ENCODE measurements at regions of chr2 and their contacts with region 1.

Region 1: GRCh38 chr2:158473719-158474392 is 17.1 kb downstream of the PKP4 start:
- DNase-seq: no peak
- ATAC-seq: peak; percentile 70
- H3K4me3 Mint-ChIP-seq: no peak overlapping the region
- H3K27ac Mint-ChIP-seq: peak overlapping the region; percentile 15
- H3K4me1 Mint-ChIP-seq: peaks cover 53% of the 10 kb centered on the region
- H3K27me3 Mint-ChIP-seq: no peaks in the 10 kb centered on the region
- CTCF ChIP-seq: no peak

Region 2: DNA sequence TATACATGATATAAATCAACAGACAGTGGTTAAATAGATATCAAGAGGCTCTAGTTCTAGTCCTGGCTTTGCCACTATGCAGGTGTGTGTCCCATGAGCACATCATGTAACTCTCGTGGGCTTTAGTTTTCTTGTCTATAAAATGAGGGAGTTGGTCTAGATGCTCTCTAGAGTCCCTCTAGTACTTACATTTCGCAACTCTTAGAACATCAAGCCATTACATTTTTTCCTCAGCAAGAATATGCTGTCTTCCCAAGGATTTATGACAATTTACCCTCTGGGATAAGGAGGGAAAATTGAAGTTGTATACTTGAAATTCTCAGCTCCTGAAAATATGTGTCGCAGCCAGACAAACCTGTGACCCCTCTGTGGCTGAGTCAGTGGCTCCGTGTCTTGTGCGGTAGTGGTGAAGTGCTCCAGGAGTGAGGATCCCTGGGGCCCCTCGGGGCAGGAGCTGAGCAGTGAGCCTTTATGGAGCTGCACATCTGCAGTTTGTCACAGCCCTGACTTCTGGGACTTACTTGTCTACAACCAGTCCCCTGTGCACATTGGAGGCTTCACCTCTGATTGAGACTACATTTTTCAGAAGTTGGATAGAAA is 10.3 kb before region 1 on chr2:
- CTCF ChIA-PET with region 1: interaction called, 14 read pairs
- POLR2A ChIA-PET with region 1: interaction called, 4 read pairs
- DNase-seq: no peak
- ATAC-seq: no peak
- H3K4me3 Mint-ChIP-seq: no peak overlapping the region
- H3K27ac Mint-ChIP-seq: peak overlapping the region; percentile 74
- H3K4me1 Mint-ChIP-seq: peaks cover 47% of the 10 kb centered on the region
- H3K27me3 Mint-ChIP-seq: no peaks in the 10 kb centered on the region
- CTCF ChIP-seq: no peak

Region 3: DNA sequence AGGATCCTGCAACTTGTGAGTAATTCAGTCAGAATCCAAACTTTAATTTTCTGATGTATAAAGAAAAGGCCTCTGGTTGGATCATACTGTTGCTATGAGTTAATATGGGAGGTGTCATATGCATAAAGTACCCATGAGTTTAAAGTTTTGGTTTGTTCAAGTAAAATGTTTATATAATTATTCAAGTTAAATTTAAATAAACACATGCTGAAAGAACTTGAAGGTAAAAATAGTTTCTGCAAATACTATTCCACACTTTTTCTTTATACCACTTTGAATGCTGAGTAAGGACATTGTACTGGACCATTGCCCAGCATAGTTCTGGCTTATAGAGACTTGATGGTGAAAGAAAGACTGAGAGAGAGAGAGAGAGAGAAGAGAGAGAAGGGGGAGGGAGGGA is 13.6 kb after region 1 on chr2:
- CTCF ChIA-PET with region 1: interaction called, 17 read pairs
- POLR2A ChIA-PET with region 1: no interaction called
- DNase-seq: no peak
- ATAC-seq: no peak
- H3K4me3 Mint-ChIP-seq: no peak overlapping the region
- H3K27ac Mint-ChIP-seq: no peak overlapping the region
- H3K4me1 Mint-ChIP-seq: peaks cover 75% of the 10 kb centered on the region
- H3K27me3 Mint-ChIP-seq: no peaks in the 10 kb centered on the region
- CTCF ChIP-seq: no peak

Region 4: DNA sequence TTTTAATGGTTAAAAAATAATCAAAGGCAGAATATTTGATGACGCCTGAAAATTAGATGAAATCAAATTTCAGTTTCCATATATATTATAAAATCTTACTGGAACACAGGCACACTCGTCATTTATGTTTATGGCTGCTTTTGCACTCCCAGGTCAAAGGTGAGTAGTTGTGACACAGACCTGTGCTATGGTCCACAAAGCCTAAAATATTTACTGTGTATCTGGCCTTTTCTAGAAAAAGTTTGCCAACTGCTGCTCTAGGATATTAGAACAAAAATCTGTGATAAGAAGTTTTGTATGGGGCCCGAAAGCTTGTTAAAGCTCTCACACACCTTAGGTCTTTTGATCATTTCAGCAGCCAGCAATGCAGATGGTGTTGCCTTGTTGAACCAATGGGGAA is 87.2 kb after region 1 on chr2:
- CTCF ChIA-PET with region 1: no interaction called
- POLR2A ChIA-PET with region 1: no interaction called
- DNase-seq: no peak
- ATAC-seq: no peak
- H3K4me3 Mint-ChIP-seq: no peak overlapping the region
- H3K27ac Mint-ChIP-seq: no peak overlapping the region
- H3K4me1 Mint-ChIP-seq: no peaks in the 10 kb centered on the region
- H3K27me3 Mint-ChIP-seq: no peaks in the 10 kb centered on the region
- CTCF ChIP-seq: no peak